PC-9 (cell line): ENCODE measurements at regions of chr2 and their contacts with region 1.

Region 1: GRCh38 chr2:121472470-121472993 is 58.1 kb upstream of the RNU4ATAC start:
- DNase-seq: no peak
- H3K4me3 ChIP-seq: no peak overlapping the region
- H3K27ac ChIP-seq: no peak overlapping the region
- H3K4me1 ChIP-seq: peaks cover 15% of the 10 kb centered on the region; the same call in 1 of the 2 replicates
- H3K27me3 ChIP-seq: no peaks in the 10 kb centered on the region
- CTCF ChIP-seq: no peak

Region 2: GRCh38 chr2:121699421-121700333 is 227.1 kb after region 1 on chr2:
- CTCF ChIA-PET with region 1: interaction called, 27 read pairs
- POLR2A ChIA-PET with region 1: no interaction called
- intact Hi-C with region 1: no loop called
- DNase-seq: peak; percentile 85 to 95
- H3K4me3 ChIP-seq: peak overlapping the region; percentile 26; the same call in 1 of the 2 replicates
- H3K27ac ChIP-seq: peak overlapping the region; percentile 81
- H3K4me1 ChIP-seq: peaks cover 58% of the 10 kb centered on the region
- H3K27me3 ChIP-seq: no peaks in the 10 kb centered on the region
- CTCF ChIP-seq: no peak